BJ (cell line): ENCODE measurements at regions of chr7 and their contacts with region 1.

Region 1: DNA sequence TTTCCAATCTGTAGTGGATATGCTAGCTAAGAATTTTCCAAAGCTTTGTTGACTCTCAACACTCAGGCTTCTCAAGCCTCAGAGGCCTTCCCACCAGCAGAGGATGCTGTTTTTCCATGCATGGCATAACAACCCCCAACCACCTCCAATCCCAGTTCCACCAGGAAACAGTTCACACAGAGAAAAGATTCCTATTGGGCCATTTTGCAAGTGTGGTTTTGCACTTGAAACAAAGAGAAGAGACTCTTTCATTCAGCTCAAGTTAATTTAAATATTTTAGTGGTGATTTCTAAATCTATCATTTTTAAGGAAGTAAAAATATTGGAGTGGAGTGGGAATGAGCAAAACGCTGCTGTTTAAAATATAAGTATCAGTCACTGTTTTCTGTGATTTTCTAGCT is 105.6 kb upstream of the COL1A2 start:
- DNase-seq: no peak
- H3K4me3 ChIP-seq: no peak overlapping the region
- H3K27me3 ChIP-seq: no peaks in the 10 kb centered on the region
- CTCF ChIP-seq: peak; percentile 100

Region 2: DNA sequence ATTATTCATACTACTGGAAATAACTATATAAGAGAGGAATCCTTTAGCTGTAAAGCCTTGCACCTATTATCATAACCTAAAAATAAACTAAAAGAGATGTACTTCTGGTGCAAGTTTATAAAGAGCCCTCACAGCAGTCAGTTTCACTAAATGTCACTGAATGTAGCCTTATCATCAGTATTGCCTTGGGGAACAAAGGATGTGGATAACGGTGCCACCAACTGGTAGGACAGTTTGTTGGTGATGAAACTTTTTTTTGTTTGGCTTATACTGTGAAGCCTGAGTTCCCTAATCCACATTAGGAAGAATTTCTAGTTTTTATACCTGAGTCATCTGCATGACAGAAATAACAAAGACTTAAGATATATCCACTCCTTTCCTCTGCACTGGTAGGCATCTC is 12.3 kb before region 1 on chr7:
- CTCF ChIA-PET with region 1: interaction called, 15 read pairs
- POLR2A ChIA-PET with region 1: no interaction called
- DNase-seq: no peak
- H3K4me3 ChIP-seq: no peak overlapping the region
- H3K27me3 ChIP-seq: no peaks in the 10 kb centered on the region
- CTCF ChIP-seq: peak; percentile 59

Region 3: GRCh38 chr7:94348142-94348541 is 59.1 kb after region 1 on chr7:
- CTCF ChIA-PET with region 1: interaction called, 14 read pairs
- POLR2A ChIA-PET with region 1: no interaction called
- DNase-seq: peak; percentile 99
- H3K4me3 ChIP-seq: no peak overlapping the region
- H3K27me3 ChIP-seq: no peaks in the 10 kb centered on the region; the same call in 1 of the 2 replicates
- CTCF ChIP-seq: no peak

Region 4: DNA sequence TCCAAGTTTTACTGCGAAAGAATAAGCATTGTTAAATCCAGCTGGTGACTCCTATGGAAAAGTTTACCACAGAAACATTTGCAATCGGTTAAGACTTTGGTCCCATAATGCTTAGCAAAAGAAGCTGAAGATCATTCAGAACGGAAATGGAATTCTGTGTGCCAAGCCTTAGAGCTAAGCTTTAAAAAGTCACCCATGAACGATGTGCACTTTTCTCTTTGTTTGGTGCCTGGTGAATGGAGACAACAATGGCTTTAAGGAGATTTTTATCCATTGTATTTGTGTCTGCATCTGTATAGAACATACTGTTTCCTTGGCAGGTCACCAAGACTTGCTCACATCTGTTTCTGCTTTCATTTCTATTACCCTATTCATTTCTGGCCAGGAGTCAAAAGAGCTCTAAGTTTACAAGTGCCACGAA is 79.3 kb after region 1 on chr7:
- CTCF ChIA-PET with region 1: interaction called, 45 read pairs
- POLR2A ChIA-PET with region 1: no interaction called
- DNase-seq: peak; percentile 74
- H3K4me3 ChIP-seq: peak overlapping the region; percentile 29
- H3K27me3 ChIP-seq: no peaks in the 10 kb centered on the region
- CTCF ChIP-seq: no peak

Region 5: DNA sequence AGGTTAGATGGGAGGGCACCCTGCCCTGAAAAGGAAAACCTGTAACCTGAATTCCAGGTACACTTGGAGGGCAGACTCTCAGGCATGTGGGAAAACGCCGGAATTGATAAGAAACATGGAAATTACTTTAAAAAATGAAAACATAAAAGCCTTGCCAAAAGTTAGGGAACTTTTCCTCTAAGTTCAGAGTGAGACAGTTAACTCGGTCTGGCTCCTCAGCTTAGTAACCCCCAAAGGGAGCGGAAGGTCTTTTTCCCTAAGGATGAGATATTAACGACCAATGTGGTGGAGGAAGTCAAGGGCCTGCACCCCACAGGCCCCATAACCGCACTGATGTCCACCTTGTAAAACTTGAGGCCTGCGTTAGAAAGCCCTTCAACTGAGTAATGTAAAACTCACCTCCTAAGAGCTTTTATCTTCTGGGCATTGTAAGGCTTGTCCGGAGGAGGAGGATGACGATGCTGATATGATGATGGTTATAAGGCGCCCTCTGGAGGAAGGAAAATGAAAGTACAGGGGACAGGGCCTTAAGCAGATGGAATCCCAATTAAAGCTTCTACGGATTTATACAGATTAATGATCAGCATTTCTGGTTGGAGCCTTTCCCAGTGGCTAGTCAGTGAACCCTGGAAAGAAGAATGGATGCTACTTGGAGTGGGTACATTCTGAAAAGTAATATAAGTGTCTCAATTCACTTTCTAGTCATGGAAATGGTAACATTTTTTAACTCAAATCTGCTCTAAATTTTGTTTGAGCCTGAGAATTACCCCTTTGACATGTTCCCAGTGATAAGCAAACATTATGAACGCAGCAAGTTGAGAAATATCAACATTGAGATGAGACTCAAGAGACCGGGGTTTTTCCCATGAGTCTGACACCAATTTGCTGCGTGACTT is 106.3 kb after region 1 on chr7:
- CTCF ChIA-PET with region 1: interaction called, 87 read pairs
- POLR2A ChIA-PET with region 1: interaction called, 166 read pairs
- DNase-seq: no peak
- H3K4me3 ChIP-seq: peak overlapping the region; percentile 67
- H3K27me3 ChIP-seq: no peaks in the 10 kb centered on the region
- CTCF ChIP-seq: peak; percentile 66

Region 6: DNA sequence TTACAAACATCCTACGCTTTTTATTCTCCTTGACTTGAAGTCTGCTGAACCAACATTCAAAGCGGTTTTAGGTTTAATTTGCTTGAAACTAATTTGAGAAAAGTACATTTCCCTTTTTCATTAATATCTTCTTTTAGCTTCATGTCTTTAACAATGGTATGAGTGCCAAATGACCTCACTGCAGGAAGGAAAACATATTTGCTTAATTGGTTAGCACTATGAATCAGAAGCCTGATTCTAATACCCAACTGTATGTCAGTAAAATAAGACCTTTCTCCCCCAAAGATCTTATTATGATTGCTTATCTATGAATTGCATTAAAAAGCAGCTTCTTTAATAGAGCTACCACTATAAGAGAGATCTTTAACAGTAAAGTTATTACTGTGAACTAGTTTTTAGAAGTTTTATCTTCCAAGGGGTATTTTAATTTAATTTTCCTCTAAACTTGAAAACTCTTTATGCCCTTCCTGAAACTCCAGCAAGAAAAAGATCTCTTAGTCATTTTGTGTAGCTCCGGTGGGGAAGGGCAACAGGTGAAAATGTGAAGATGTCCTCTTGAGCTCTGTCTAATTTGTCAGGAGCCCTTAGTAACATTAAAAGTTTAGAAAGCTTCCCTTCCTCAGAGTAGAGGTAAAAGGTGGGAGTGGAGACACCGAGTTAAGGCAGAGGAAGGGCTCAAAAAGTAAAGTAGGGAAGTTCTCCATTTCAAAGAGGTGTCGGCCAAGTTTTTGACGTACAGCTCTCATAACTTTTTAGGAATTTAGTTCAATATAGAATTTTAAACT is 111.8 kb after region 1 on chr7:
- CTCF ChIA-PET with region 1: interaction called, 87 read pairs
- POLR2A ChIA-PET with region 1: interaction called, 166 read pairs
- DNase-seq: no peak
- H3K4me3 ChIP-seq: peak overlapping the region; percentile 67
- H3K27me3 ChIP-seq: no peaks in the 10 kb centered on the region
- CTCF ChIP-seq: no peak

Region 7: DNA sequence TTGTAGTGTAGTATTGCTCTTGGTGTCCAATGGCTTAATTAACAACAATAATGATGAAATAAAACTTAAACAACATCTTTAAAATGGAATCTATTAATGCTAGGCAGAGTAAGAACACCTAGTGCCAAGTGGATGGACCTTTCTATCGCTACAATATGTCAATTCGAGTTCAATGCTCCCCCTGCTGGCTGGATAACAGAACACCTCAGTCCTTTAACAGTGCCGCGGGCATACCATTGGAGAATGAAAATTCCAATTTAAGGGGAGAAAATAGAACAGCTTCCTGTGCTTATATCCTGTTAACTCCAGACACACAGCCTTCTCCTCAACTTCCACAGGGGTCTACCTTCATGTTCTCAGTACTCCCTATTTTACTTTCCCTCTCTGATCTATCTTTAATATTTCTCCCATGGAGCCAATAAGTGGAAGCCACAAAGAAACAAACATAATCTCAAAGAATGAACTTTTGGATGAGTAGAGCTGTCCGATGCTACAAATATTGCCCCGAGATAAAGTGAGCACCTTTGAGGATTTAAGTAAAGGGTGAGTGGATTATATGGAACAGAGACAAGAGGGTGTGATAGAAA is 147.0 kb after region 1 on chr7:
- CTCF ChIA-PET with region 1: interaction called, 405 read pairs
- POLR2A ChIA-PET with region 1: interaction called, 5 read pairs
- DNase-seq: no peak
- H3K4me3 ChIP-seq: no peak overlapping the region
- H3K27me3 ChIP-seq: no peaks in the 10 kb centered on the region
- CTCF ChIP-seq: peak; percentile 79